CD8-positive, alpha-beta T cell (primary cell): ENCODE measurements at regions of chr16 and their contacts with region 1.

Region 1: GRCh38 chr16:50281964-50282538 is 15.7 kb downstream of the ADCY7 start:
- DNase-seq: peak; percentile 43 to 88 (median 71)
- ATAC-seq: peak; percentile 62
- H3K4me3 ChIP-seq: peak overlapping the region; percentile 40 to 46
- H3K4me3 Mint-ChIP-seq: peak overlapping the region; percentile 76
- H3K27ac ChIP-seq: peak overlapping the region; percentile 46 to 70
- H3K27ac Mint-ChIP-seq: peak overlapping the region; percentile 89
- H3K4me1 ChIP-seq: peaks cover 90% of the 10 kb centered on the region
- H3K4me1 Mint-ChIP-seq: peaks cover 89% of the 10 kb centered on the region
- H3K27me3 ChIP-seq: no peaks in the 10 kb centered on the region
- H3K27me3 Mint-ChIP-seq: no peaks in the 10 kb centered on the region
- CTCF ChIP-seq: no peak

Region 2: GRCh38 chr16:49382916-49383315 is 899.1 kb before region 1 on chr16:
- CTCF ChIA-PET with region 1: no interaction called
- POLR2A ChIA-PET with region 1: no interaction called
- intact Hi-C with region 1: no loop called
- DNase-seq: no peak
- ATAC-seq: no peak
- H3K4me3 ChIP-seq: no peak overlapping the region
- H3K4me3 Mint-ChIP-seq: no peak overlapping the region
- H3K27ac ChIP-seq: no peak overlapping the region
- H3K27ac Mint-ChIP-seq: no peak overlapping the region
- H3K4me1 ChIP-seq: no peaks in the 10 kb centered on the region
- H3K4me1 Mint-ChIP-seq: no peaks in the 10 kb centered on the region
- H3K27me3 ChIP-seq: no peaks in the 10 kb centered on the region
- H3K27me3 Mint-ChIP-seq: peaks cover 4% of the 10 kb centered on the region
- CTCF ChIP-seq: no peak

Region 3: DNA sequence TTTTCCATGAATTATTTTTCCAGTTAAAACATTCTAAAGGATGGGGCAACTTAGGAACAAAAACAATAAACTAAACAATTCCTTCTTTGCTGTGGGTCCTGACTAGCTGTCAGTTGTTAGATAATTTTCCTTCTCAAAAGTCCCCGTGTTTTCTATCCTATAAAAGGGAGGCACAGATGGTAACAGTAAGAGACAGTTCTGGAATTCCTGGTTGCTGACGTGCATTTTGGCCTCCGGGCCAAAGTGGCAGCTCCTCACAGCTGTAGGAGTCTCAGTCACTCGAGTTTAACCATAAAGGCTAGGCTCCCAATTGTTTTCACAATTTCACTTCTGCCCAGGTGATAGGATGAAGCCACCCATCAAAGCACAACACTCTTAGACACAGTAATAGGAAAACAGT is 349.1 kb before region 1 on chr16:
- CTCF ChIA-PET with region 1: no interaction called
- POLR2A ChIA-PET with region 1: no interaction called
- intact Hi-C with region 1: no loop called
- DNase-seq: no peak
- ATAC-seq: no peak
- H3K4me3 ChIP-seq: no peak overlapping the region
- H3K4me3 Mint-ChIP-seq: no peak overlapping the region
- H3K27ac ChIP-seq: no peak overlapping the region
- H3K27ac Mint-ChIP-seq: no peak overlapping the region
- H3K4me1 ChIP-seq: no peaks in the 10 kb centered on the region
- H3K4me1 Mint-ChIP-seq: no peaks in the 10 kb centered on the region
- H3K27me3 ChIP-seq: no peaks in the 10 kb centered on the region
- H3K27me3 Mint-ChIP-seq: peaks cover 9% of the 10 kb centered on the region
- CTCF ChIP-seq: no peak

Region 4: DNA sequence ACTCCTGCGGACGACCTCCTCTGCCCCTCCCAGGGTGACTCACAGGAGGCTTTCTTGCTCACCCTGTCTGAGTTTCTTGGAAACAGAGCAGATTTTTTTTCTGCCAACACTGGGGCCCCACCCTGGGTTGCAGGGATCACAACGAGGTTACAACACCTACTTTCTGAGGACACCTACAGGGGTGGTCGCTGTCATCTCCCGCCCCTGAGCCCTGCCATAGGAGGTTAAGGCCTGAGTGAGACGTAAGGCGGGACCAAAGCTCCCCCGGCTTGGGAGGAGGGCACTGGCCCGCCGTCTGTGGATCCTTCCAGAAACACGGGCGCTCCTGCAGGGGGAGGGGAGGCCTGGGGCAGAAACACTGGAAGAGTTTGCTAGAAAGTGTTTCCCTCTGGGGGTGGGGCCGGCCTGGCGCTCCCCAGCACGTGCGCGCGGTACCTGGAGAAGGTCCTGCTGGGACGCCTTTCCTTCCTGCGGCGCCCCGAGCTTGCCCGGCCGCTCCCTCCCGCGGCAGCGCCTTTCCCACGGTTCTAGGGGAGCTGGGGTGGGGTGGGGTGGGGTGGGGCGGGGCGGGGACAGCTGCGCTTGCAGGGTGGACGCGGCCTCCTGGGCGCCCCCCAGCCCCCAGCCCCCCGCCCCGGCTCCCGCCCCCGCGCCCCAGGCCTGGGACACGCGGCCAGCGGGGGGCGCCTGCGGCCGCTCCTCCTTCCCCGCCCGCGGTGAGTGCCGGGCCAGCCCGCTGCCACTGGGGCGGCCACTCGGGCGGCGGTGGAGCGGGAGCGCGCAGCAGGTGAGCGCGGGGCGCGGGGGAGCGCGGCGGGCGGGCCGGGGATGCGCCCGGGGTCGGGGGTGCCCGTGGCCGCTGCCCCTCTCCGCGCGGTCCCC is 36.4 kb before region 1 on chr16:
- CTCF ChIA-PET with region 1: interaction called, 10 read pairs
- POLR2A ChIA-PET with region 1: interaction called, 3 read pairs
- intact Hi-C with region 1: loop called in 1 of 2 experiments (anchors 5 kb)
- DNase-seq: peak in 7 of 9 experiments; percentile 42 to 69 (median 56)
- ATAC-seq: peak; percentile 69
- H3K4me3 ChIP-seq: peak overlapping the region; percentile 50 to 55
- H3K4me3 Mint-ChIP-seq: peak overlapping the region; percentile 77
- H3K27ac ChIP-seq: no peak overlapping the region
- H3K27ac Mint-ChIP-seq: no peak overlapping the region
- H3K4me1 ChIP-seq: peaks cover 7% of the 10 kb centered on the region
- H3K4me1 Mint-ChIP-seq: peaks cover 7% of the 10 kb centered on the region
- H3K27me3 ChIP-seq: no peaks in the 10 kb centered on the region
- H3K27me3 Mint-ChIP-seq: no peaks in the 10 kb centered on the region
- CTCF ChIP-seq: no peak